Activated CD4-positive, alpha-beta memory T cell treated with anti-CD3 and anti-CD28 coated beads, Interleukin-2, amount 10 ng/mL, durations not matched to agents 7 days and 5 days (primary cell): ENCODE measurements at regions of chr6 and their contacts with region 1.

Region 1: GRCh38 chr6:26017632-26017966 is 55.0 kb downstream of the TRIM38 start:
- DNase-seq: peak; percentile 86
- H3K4me3 Mint-ChIP-seq: peak overlapping the region; percentile 74
- H3K27ac Mint-ChIP-seq: peak overlapping the region; percentile 96
- H3K4me1 Mint-ChIP-seq: peaks cover 39% of the 10 kb centered on the region
- H3K27me3 Mint-ChIP-seq: no peaks in the 10 kb centered on the region

Region 2: DNA sequence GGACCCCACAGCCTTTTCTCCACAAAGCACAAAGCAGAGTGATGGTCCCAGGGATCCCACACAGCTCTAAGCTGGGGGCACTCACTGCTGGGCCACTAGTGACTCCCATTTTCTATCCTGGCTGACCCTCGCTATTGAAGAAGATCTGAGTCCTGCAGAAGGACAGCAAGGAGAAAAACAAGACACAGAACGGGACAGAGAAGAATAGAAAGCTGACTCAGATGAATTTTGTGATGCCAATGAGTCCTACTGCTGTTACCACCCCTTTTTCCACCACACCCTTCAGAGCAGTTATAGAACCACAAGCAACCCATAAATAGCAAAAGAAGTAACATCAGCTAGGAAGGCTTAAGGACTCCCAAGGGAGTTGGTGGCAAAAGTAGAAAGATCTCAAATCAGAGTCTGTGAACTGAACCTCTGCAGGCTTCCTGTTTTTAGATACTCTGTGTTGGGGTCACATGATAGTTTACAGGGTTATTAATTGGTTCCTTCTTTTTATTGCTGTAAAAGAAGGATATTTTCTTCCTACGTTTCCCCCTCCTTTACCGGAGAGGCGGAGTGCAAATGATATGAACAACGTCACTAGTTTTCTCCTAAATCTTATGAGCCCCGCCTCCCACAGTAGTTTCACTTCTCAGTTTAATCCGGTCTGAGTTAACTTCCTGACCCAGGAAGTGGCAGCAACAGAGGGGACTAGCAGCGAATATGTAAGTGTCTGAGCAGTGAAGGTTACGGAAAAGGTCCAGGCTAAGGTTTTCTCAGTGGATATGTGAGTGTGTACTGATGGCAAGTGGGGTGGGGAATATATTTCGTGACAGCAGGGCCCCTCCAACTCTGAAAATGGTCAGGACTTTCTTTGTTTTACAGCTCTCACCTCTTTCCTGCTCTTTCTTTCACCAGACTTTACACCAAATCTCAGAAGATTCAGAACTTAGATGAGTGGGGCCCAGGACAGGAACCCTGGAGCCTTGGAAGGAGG is 55.2 kb before region 1 on chr6 and contains the start of gene TRIM38:
- CTCF ChIA-PET with region 1: interaction called, 5 read pairs
- POLR2A ChIA-PET with region 1: interaction called, 78 read pairs
- DNase-seq: peak; percentile 84
- H3K4me3 Mint-ChIP-seq: peak within 1 kb of the TSS; percentile 96
- H3K27ac Mint-ChIP-seq: peak within 1 kb of the TSS; percentile 96
- H3K4me1 Mint-ChIP-seq: peaks cover 80% of the 10 kb centered on the region
- H3K27me3 Mint-ChIP-seq: no peaks in the 10 kb centered on the region
- total RNA-seq, gene TRIM38: 32.6 to 33.5 TPM

Region 3: DNA sequence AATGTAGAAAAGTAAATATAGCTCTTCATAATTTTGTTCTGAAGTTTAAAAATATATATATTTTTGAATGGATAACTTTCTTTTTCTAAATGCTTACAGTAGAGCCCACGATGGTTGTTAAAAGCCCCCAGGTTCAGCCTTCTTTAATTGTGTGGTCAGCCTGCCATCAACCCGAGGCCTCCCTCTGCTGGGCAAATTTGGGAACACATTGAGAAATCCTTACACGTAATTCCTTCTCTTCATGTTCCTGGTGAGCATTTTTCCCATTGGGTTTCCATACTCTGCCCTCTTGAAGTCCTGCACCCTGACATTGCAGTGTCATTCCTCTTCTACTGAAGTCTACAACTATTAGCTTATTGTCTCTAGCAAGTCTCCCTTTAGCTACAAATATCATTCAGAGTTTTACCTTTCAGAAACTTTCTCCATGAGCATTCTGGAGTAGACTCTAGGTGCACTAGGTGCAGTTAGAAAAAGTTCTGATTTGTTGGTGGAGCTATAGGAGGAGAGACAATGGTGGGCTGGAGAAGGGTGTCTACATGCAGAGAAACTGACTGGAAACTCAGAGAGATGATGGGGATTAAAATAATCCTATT is 14.4 kb before region 1 on chr6:
- CTCF ChIA-PET with region 1: interaction called, 100 read pairs
- POLR2A ChIA-PET with region 1: interaction called, 33 read pairs
- DNase-seq: peak; percentile 44
- H3K4me3 Mint-ChIP-seq: no peak overlapping the region
- H3K27ac Mint-ChIP-seq: no peak overlapping the region
- H3K4me1 Mint-ChIP-seq: peaks cover 5% of the 10 kb centered on the region
- H3K27me3 Mint-ChIP-seq: no peaks in the 10 kb centered on the region